K562 (cell line): ENCODE measurements at regions of chr19 and their contacts with region 1.

Region 1: DNA sequence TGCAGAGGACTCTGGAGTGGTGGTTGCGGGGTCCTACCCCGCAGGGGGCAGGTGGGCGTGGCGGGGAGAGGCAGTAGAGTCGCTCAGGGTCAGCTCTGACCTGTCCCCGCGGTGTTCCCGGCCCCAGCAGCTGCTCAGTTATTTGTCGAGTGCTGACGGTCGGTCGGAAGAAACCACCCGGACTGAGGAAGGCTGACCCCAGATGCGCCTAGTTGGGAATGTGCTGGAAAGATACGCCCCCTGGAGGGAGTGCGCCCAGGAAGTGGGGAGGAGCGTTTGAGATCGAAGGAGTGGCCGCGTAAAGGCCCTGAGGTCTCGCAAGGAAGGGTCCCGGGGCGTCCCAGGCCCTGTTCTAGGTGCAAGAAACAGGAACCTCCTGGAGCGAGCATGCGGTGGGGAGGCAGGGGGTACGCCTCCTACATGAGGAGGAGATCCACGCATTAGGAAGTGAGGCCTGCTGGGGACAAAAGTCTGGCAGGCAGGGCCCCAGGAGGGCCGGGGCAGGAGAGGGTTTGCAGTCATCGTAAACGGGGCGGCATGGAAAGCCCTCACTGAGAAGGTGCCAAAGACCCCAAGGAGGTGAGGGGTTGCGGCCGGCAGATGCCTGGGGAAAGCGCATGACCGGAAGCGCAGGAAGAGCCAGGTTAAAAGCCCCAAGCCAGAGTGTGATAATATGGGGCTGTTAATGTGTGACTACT is 9.2 kb downstream of the CCDC8 start:
- DNase-seq: peak; percentile 33 to 58 (median 48)
- ATAC-seq: peak; percentile 24
- H3K4me3 ChIP-seq: no peak overlapping the region
- H3K27ac ChIP-seq: peak overlapping the region; percentile 37; the same call in 2 of the 3 replicates
- H3K4me1 ChIP-seq: peaks cover 16 to 28% of the 10 kb centered on the region in 2 experiments
- H3K27me3 ChIP-seq: 0 out of 5 replicates have a peak, but pooled peaks cover 0 to 2% of the 10 kb centered on the region in 2 experiments
- CTCF ChIP-seq: peak in 2 of 3 experiments; percentile 1 to 24; a peak in 4 of 6 replicates
- EP300 ChIP-seq: no peak
- POLR2A ChIP-seq: no peak
- RAD21 ChIP-seq: no peak

Region 2: GRCh38 chr19:46431824-46432223 is 27.6 kb after region 1 on chr19:
- CTCF ChIA-PET with region 1: interaction called, 5 read pairs
- POLR2A ChIA-PET with region 1: interaction called, 4 read pairs
- in situ Hi-C with region 1: no loop called
- intact Hi-C with region 1: loop called (anchors 2 kb)
- DNase-seq: peak; percentile 36 to 60 (median 48)
- ATAC-seq: peak; percentile 90
- H3K4me3 ChIP-seq: no peak overlapping the region
- H3K27ac ChIP-seq: no peak overlapping the region
- H3K4me1 ChIP-seq: peaks cover 0 to 11% of the 10 kb centered on the region in 2 experiments; a peak in 2 of 5 replicates
- H3K27me3 ChIP-seq: peaks cover 35 to 37% of the 10 kb centered on the region in 2 experiments
- CTCF ChIP-seq: peak; percentile 66 to 85 (median 79)
- EP300 ChIP-seq: no peak
- POLR2A ChIP-seq: no peak
- RAD21 ChIP-seq: peak; percentile 21 to 74; a peak in 2 of 4 replicates

Region 3: DNA sequence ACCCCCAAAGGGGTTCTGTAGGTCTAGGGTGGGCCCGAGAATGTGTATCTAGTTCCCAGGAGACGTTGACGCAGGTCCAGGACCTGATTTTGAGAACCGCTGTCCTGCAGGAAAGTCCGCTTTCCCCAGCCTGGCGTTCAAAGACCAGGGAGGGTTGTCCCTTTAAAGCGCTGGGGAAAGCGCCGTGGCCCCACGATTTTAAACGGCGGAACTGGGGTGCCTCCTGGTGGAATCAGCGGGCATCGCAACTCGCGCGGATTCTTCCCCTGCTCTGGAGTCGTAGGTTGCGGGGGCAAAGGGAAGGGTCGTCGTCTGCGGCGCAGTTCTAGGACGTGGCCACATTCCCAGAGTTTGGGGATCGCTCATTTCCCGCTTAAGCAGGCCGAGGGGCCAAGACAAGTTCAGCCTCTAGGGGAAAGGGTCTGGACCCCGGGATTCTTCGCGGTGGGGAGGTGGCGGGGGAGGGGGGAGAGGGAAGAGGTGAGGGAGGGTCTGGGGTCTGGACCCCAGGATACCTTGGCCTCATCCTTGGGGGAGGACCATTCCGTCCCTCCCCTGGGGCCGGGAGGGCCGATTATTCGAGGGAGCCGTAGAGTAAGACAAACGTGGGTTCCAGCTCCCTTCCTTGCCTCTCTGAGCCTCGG is 83.7 kb after region 1 on chr19:
- CTCF ChIA-PET with region 1: interaction called, 325 read pairs
- POLR2A ChIA-PET with region 1: no interaction called
- in situ Hi-C with region 1: loop called (anchors 5 kb)
- intact Hi-C with region 1: loop called (anchors 2 kb)
- DNase-seq: peak; percentile 74 to 80 (median 77)
- ATAC-seq: peak; percentile 89
- H3K4me3 ChIP-seq: no peak overlapping the region
- H3K27ac ChIP-seq: no peak overlapping the region
- H3K4me1 ChIP-seq: peaks cover 0 to 22% of the 10 kb centered on the region in 2 experiments; a peak in 4 of 5 replicates
- H3K27me3 ChIP-seq: peaks cover 51 to 80% of the 10 kb centered on the region in 2 experiments
- CTCF ChIP-seq: peak; percentile 94 to 97 (median 95)
- EP300 ChIP-seq: no peak
- POLR2A ChIP-seq: no peak
- RAD21 ChIP-seq: peak; percentile 96 to 99